ENCODE measurements at regions of chr22 and their contacts with region 1.

Region 1: GRCh38 chr22:30920407-30920806 is 48.2 kb downstream of the MORC2 start:
- DNase-seq: peak; percentile 67 to 70
- ATAC-seq: peak; percentile 85 to 90
- H3K4me3 ChIP-seq: no peak overlapping the region
- H3K27ac ChIP-seq: peak overlapping the region; percentile 51 to 58; a peak in 3 of 6 replicates
- H3K4me1 ChIP-seq: peaks cover 14% of the 10 kb centered on the region; the same call in 1 of the 3 replicates
- CTCF ChIP-seq: peak; percentile 82
- EP300 ChIP-seq: no peak
- POLR2A ChIP-seq: no peak
- RAD21 ChIP-seq: peak; percentile 86

Region 2: GRCh38 chr22:30634471-30635233 is 285.8 kb before region 1 on chr22:
- CTCF ChIA-PET with region 1: interaction called, 13 read pairs
- POLR2A ChIA-PET with region 1: no interaction called
- DNase-seq: peak; percentile 86 to 88
- ATAC-seq: peak; percentile 81 to 84
- H3K4me3 ChIP-seq: peak overlapping the region; percentile 80
- H3K27ac ChIP-seq: peak overlapping the region; percentile 67 to 97
- H3K4me1 ChIP-seq: peaks cover 21% of the 10 kb centered on the region
- CTCF ChIP-seq: peak; percentile 78
- EP300 ChIP-seq: no peak
- POLR2A ChIP-seq: no peak
- RAD21 ChIP-seq: peak; percentile 79 to 81

Region 3: DNA sequence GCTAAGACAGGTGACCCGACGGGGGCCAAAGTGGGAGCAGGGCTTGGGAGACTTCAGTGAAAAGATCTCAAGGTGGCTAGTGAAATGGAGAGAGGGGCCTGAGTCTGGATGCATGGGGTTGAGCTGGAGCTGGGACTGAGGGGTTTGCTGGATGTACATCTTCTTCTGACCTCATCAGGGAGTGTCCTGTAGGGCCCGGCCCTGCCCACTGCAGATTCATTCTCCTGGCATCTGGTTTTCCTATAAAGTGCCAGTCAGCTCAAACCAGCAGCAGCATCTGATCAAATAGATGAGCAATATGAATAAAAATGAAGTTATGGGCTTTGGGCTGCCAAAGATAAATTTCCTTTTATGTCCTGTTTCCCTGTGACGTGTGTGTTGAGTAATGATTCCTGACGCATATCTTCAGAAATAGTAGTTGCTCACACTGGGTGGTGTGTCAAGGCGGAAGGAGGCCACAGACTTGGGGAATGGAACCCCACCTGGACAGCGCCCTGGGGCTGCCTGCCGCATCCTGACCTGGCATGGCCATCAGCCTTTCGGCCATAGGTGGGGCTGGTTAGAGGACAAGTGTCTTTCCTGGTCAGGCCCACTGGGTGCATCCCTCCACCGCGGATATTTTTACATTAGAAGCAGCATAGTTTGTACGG is 90.4 kb before region 1 on chr22:
- CTCF ChIA-PET with region 1: interaction called, 11 read pairs
- POLR2A ChIA-PET with region 1: no interaction called
- DNase-seq: peak; percentile 85 to 97
- ATAC-seq: peak; percentile 93
- H3K4me3 ChIP-seq: peak overlapping the region; percentile 20; the same call in 2 of the 3 replicates
- H3K27ac ChIP-seq: peak overlapping the region; percentile 93 to 99
- H3K4me1 ChIP-seq: peaks cover 52% of the 10 kb centered on the region
- CTCF ChIP-seq: no peak
- EP300 ChIP-seq: peak; percentile 93 to 97
- POLR2A ChIP-seq: no peak
- RAD21 ChIP-seq: peak in 1 of 2 experiments; percentile 30; a peak in 1 of 5 replicates

Region 4: GRCh38 chr22:30890686-30891442 is 29.5 kb before region 1 on chr22:
- CTCF ChIA-PET with region 1: interaction called, 31 read pairs
- POLR2A ChIA-PET with region 1: no interaction called
- DNase-seq: peak; percentile 30 to 36
- ATAC-seq: peak; percentile 54 to 91; a peak in 4 of 6 replicates
- H3K4me3 ChIP-seq: no peak overlapping the region
- H3K27ac ChIP-seq: peak overlapping the region; percentile 44 to 75; a peak in 4 of 6 replicates
- H3K4me1 ChIP-seq: no peaks in the 10 kb centered on the region
- CTCF ChIP-seq: peak; percentile 50
- EP300 ChIP-seq: no peak
- POLR2A ChIP-seq: no peak
- RAD21 ChIP-seq: peak; percentile 44 to 50

Region 5: DNA sequence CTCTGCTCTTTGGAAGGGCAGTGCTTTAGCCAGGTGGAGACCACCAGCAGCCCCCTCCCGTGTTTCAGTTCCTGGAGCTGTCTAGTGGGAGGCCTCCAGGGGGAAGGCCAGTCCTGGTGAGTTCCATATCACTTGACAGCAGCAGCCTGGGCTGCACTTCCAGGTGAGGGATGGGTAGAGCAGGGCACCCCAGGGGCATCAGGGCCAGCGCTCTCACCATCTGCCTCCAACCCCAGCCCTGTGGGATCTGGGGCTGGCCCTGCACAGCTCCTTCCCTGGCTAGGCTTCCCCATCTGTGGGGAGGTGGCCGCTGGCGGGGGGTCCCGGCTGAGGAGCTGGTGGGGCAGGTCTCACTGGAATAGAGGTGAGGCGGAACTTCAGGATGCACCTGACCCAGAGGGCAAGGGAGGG is 12.4 kb before region 1 on chr22:
- CTCF ChIA-PET with region 1: interaction called, 43 read pairs
- POLR2A ChIA-PET with region 1: no interaction called
- DNase-seq: no peak
- ATAC-seq: no peak
- H3K4me3 ChIP-seq: no peak overlapping the region
- H3K27ac ChIP-seq: no peak overlapping the region
- H3K4me1 ChIP-seq: no peaks in the 10 kb centered on the region
- CTCF ChIP-seq: no peak
- EP300 ChIP-seq: no peak
- POLR2A ChIP-seq: no peak
- RAD21 ChIP-seq: no peak

Region 6: DNA sequence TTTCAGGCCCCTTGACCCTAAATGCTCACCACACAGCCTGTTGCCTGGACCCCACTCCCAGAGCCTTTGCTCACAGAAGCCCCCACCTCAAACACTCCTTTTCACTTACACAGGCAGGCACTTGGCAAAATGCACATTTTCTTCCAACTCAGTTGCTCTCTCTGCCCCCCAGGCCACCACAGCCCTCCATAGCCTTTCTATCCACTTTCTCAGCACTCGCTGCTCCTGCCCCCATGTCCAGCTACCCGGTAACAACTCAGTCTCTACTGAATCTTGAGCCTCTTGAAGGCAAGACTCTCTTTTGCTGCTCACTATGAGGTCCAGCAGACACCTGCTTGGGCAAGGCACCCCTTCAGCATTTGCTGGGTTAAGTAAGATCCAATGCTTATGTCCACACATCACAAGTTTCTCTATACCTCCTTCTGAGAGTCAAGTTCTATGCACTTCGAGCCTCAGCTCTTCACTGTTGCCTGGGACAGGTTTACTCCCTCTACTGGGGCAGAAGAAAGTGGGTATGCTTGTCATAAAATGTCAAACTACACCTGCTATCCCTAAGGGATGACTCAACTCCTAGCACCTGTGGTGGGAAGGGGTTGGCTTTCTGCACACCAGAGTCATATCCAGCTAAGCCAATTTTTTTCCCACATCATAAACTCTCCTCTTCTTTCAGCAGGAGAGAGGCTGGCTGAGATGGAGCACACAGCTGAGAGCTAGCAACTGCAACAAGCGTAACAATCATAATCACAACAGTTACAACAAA is 11.3 kb after region 1 on chr22:
- CTCF ChIA-PET with region 1: interaction called, 29 read pairs
- POLR2A ChIA-PET with region 1: no interaction called
- DNase-seq: no peak
- ATAC-seq: no peak
- H3K4me3 ChIP-seq: no peak overlapping the region
- H3K27ac ChIP-seq: no peak overlapping the region
- H3K4me1 ChIP-seq: no peaks in the 10 kb centered on the region
- CTCF ChIP-seq: no peak
- EP300 ChIP-seq: no peak
- POLR2A ChIP-seq: no peak
- RAD21 ChIP-seq: no peak

Region 7: GRCh38 chr22:31020334-31020733 is 99.9 kb after region 1 on chr22:
- CTCF ChIA-PET with region 1: no interaction called
- POLR2A ChIA-PET with region 1: no interaction called
- DNase-seq: no peak
- ATAC-seq: no peak
- H3K4me3 ChIP-seq: no peak overlapping the region
- H3K27ac ChIP-seq: no peak overlapping the region
- H3K4me1 ChIP-seq: no peaks in the 10 kb centered on the region
- CTCF ChIP-seq: no peak
- EP300 ChIP-seq: no peak
- POLR2A ChIP-seq: no peak
- RAD21 ChIP-seq: no peak

Measured in A549 (cell line).